Left colon (tissue), 2 donors: ENCODE measurements at regions of chr6 and their contacts with region 1.

Region 1: GRCh38 chr6:13614926-13615798 is at the start of gene NOL7:
- DNase-seq: peak; percentile 97
- ATAC-seq: peak; percentile 93
- total RNA-seq, gene NOL7: 49.5 to 55.6 TPM

Region 2: GRCh38 chr6:13709689-13710551 is 94.8 kb after region 1 on chr6:
- intact Hi-C with region 1: loop called in 1 of 2 experiments (anchors 10 kb)
- DNase-seq: no peak
- ATAC-seq: no peak

Region 3: DNA sequence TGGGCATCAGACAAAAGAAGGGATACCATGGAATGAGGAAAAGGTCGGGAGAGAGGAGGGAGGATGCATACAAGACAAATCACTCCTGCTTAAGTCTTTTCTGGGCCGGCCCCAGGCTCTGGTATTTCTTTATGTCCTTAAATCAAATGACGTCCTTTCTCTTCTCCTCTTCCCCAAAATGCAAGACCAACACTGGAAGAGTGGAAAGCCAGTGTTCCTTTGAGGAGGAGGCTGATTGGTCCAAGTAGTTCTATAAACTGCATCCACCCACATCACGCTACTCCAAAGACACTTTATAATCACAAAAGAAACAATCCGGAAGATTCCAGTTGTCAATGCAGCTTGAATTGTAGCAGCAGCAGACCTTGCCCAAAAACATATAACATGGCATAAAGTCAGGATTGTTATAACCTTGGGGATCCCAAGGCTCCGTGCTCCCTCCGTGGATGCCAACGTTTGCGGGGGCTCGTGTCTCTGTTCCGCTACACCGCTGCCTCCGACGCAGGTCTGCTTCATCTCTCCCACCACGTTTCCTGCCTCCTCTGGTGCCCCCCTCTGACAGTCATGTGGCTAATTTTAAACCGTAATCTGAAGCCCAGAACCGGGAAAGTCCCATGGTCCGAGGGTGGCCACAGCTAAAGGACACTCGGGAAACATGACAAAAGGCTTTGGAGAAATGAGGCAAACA is 152.1 kb after region 1 on chr6:
- intact Hi-C with region 1: loop called in 1 of 2 experiments (anchors 10 kb)
- DNase-seq: peak; percentile 32 to 44
- ATAC-seq: no peak

Region 4: GRCh38 chr6:13892007-13892645 is 277.0 kb after region 1 on chr6:
- intact Hi-C with region 1: no loop called
- DNase-seq: no peak
- ATAC-seq: no peak